Common myeloid progenitor, CD34-positive (primary cell): ENCODE measurements at regions of chr15 and their contacts with region 1.

Region 1: GRCh38 chr15:82871358-82871757 is 61.9 kb downstream of the WHAMM start:
- DNase-seq: peak; percentile 63 to 90 (median 83)
- H3K4me3 ChIP-seq: peak overlapping the region in 4 of 7 experiments; percentile 24 to 58 (median 36)
- H3K27ac ChIP-seq: peak overlapping the region; percentile 67 to 71
- H3K4me1 ChIP-seq: peaks cover 8 to 39% (median 28%) of the 10 kb centered on the region in 4 experiments
- H3K27me3 ChIP-seq: no peaks in the 10 kb centered on the region

Region 2: GRCh38 chr15:82855286-82856100 is 15.9 kb before region 1 on chr15:
- CTCF ChIA-PET with region 1: interaction called, 14 read pairs
- POLR2A ChIA-PET with region 1: interaction called, 4 read pairs
- DNase-seq: peak; percentile 45 to 74 (median 69)
- H3K4me3 ChIP-seq: peak overlapping the region in 4 of 7 experiments; percentile 15 to 63 (median 27)
- H3K27ac ChIP-seq: peak overlapping the region; percentile 29 to 74
- H3K4me1 ChIP-seq: peaks cover 4 to 32% (median 28%) of the 10 kb centered on the region in 4 experiments
- H3K27me3 ChIP-seq: no peaks in the 10 kb centered on the region

Region 3: GRCh38 chr15:83127648-83128047 is 256.3 kb after region 1 on chr15:
- CTCF ChIA-PET with region 1: no interaction called
- POLR2A ChIA-PET with region 1: no interaction called
- DNase-seq: no peak
- H3K4me3 ChIP-seq: no peak overlapping the region
- H3K27ac ChIP-seq: no peak overlapping the region
- H3K4me1 ChIP-seq: no peaks in the 10 kb centered on the region
- H3K27me3 ChIP-seq: no peaks in the 10 kb centered on the region